ENCODE measurements at regions of chr19 and their contacts with region 1.

Region 1: GRCh38 chr19:56066152-56067023 is 54.7 kb downstream of the ZNF787 start:
- DNase-seq: peak; percentile 44
- H3K4me3 Mint-ChIP-seq: peak overlapping the region; percentile 54
- H3K27ac Mint-ChIP-seq: no peak overlapping the region
- H3K4me1 Mint-ChIP-seq: peaks cover 10% of the 10 kb centered on the region
- H3K27me3 Mint-ChIP-seq: no peaks in the 10 kb centered on the region

Region 2: GRCh38 chr19:56026769-56027168 is 39.6 kb before region 1 on chr19:
- intact Hi-C with region 1: no loop called
- DNase-seq: no peak
- H3K4me3 Mint-ChIP-seq: no peak overlapping the region
- H3K27ac Mint-ChIP-seq: no peak overlapping the region
- H3K4me1 Mint-ChIP-seq: no peaks in the 10 kb centered on the region
- H3K27me3 Mint-ChIP-seq: no peaks in the 10 kb centered on the region

Region 3: DNA sequence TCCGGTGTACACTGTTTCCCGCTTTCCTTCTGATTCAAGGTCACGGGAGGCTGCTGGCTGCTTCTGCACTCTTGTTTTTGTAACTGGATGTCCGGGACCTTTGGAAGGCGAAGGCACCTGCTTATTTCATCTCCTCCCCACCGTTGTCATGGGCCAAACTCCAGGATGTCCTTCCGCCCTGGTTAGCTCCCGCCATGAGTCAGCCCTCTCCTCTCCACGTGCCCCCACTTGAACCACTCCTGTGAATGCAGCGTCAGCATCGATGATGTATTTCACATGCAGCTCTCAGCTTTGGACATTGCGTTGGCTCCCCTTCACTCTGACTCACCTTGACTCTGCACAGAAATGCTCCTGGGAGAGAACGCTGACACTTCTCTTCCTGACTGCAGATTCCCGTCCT is 103.9 kb after region 1 on chr19:
- intact Hi-C with region 1: loop called (anchors 5 kb)
- DNase-seq: no peak
- H3K4me3 Mint-ChIP-seq: no peak overlapping the region
- H3K27ac Mint-ChIP-seq: no peak overlapping the region
- H3K4me1 Mint-ChIP-seq: no peaks in the 10 kb centered on the region
- H3K27me3 Mint-ChIP-seq: no peaks in the 10 kb centered on the region

Region 4: GRCh38 chr19:56333505-56333904 is 267.1 kb after region 1 on chr19:
- intact Hi-C with region 1: loop called (anchors 1 kb)
- DNase-seq: no peak
- H3K4me3 Mint-ChIP-seq: no peak overlapping the region
- H3K27ac Mint-ChIP-seq: no peak overlapping the region
- H3K4me1 Mint-ChIP-seq: no peaks in the 10 kb centered on the region
- H3K27me3 Mint-ChIP-seq: peaks cover 1% of the 10 kb centered on the region

Measured in activated T-helper 2 cell treated with anti-CD3 and anti-CD28 coated beads, Interferon-gamma antibody, Interleukin-2, Interleukin-4, amounts not matched to agents 10 μg/mL and 5 μg/mL and 100 μg/mL, durations not matched to agents 14 hours and 24 hours and 36 hours (primary cell).